ENCODE measurements at regions of chr9 and their contacts with region 1.

Region 1: DNA sequence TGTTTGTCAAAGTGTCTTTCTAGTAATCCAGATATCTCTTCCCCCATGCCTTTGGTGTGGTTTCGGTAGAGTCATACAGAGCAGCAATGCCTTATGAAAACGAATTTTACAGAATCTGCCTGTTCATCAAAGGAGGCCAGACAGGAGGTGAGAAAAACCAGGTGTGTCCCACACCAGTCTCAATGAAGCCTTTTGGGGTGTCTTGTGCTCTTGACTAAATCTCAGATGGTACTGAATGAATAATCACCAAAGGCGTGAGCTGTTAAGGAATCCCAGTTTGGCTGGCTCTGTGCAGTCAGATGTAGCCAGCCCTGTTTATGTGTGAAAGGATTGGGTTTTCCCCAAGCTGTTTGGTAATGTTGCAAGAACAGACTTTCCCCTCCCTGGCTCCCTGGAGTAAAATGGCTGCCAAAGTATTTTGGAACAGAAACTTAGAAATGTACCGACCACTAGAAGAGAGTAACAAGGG is 70.8 kb upstream of the CDKN2B start:
- DNase-seq: peak; percentile 57
- H3K4me3 Mint-ChIP-seq: peak overlapping the region; percentile 12
- H3K27ac Mint-ChIP-seq: peak overlapping the region; percentile 86
- H3K4me1 Mint-ChIP-seq: peaks cover 46% of the 10 kb centered on the region
- H3K27me3 Mint-ChIP-seq: peaks cover 36% of the 10 kb centered on the region

Region 2: DNA sequence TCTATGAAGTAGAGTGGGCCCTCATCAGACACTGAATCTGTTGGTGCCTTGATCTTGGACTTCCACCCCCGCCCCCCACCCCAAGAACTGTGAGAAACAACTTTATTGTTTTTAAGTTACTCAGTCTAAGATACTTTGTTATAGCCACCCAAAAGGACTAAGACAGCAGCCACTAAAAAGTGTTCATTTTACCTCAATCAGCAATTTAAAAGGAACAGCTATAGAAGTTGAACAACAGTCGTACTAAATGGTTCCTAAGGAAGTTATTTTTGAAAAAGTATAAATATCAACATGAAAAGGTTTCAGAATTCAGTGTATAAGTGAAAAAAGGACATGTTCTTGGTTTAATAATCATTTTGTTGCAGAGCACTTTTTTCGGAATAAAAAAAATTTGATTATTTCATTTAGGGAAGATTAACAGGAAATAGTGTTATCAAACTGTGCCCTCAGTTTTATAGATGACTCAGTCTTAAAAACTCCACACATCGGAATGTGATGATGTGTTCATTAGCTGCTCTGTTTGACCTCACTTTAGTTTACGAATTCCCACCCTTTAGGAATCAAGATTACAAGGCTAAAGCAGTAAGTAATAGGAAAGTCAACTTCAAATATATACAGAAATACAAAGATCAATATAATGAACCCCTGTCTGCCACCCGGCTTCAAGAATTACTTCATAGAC is 206.2 kb before region 1 on chr9:
- CTCF ChIA-PET with region 1: no interaction called
- POLR2A ChIA-PET with region 1: no interaction called
- DNase-seq: no peak
- H3K4me3 Mint-ChIP-seq: no peak overlapping the region
- H3K27ac Mint-ChIP-seq: no peak overlapping the region
- H3K4me1 Mint-ChIP-seq: no peaks in the 10 kb centered on the region
- H3K27me3 Mint-ChIP-seq: no peaks in the 10 kb centered on the region

Region 3: GRCh38 chr9:22037954-22038690 is 41.8 kb before region 1 on chr9:
- CTCF ChIA-PET with region 1: no interaction called
- POLR2A ChIA-PET with region 1: interaction called, 11 read pairs
- DNase-seq: no peak
- H3K4me3 Mint-ChIP-seq: no peak overlapping the region
- H3K27ac Mint-ChIP-seq: no peak overlapping the region
- H3K4me1 Mint-ChIP-seq: peaks cover 44% of the 10 kb centered on the region
- H3K27me3 Mint-ChIP-seq: peaks cover 21% of the 10 kb centered on the region

Region 4: GRCh38 chr9:22065431-22066200 is 14.3 kb before region 1 on chr9:
- CTCF ChIA-PET with region 1: interaction called, 11 read pairs
- POLR2A ChIA-PET with region 1: interaction called, 16 read pairs
- DNase-seq: no peak
- H3K4me3 Mint-ChIP-seq: no peak overlapping the region
- H3K27ac Mint-ChIP-seq: peak overlapping the region; percentile 75
- H3K4me1 Mint-ChIP-seq: peaks cover 46% of the 10 kb centered on the region
- H3K27me3 Mint-ChIP-seq: peaks cover 10% of the 10 kb centered on the region

Region 5: GRCh38 chr9:22105005-22105722 is 25.3 kb after region 1 on chr9:
- CTCF ChIA-PET with region 1: interaction called, 5 read pairs
- POLR2A ChIA-PET with region 1: interaction called, 12 read pairs
- DNase-seq: no peak
- H3K4me3 Mint-ChIP-seq: no peak overlapping the region
- H3K27ac Mint-ChIP-seq: peak overlapping the region; percentile 69
- H3K4me1 Mint-ChIP-seq: peaks cover 51% of the 10 kb centered on the region
- H3K27me3 Mint-ChIP-seq: peaks cover 31% of the 10 kb centered on the region